CD8-positive, alpha-beta T cell (primary cell): ENCODE measurements at regions of chr15 and their contacts with region 1.

Region 1: DNA sequence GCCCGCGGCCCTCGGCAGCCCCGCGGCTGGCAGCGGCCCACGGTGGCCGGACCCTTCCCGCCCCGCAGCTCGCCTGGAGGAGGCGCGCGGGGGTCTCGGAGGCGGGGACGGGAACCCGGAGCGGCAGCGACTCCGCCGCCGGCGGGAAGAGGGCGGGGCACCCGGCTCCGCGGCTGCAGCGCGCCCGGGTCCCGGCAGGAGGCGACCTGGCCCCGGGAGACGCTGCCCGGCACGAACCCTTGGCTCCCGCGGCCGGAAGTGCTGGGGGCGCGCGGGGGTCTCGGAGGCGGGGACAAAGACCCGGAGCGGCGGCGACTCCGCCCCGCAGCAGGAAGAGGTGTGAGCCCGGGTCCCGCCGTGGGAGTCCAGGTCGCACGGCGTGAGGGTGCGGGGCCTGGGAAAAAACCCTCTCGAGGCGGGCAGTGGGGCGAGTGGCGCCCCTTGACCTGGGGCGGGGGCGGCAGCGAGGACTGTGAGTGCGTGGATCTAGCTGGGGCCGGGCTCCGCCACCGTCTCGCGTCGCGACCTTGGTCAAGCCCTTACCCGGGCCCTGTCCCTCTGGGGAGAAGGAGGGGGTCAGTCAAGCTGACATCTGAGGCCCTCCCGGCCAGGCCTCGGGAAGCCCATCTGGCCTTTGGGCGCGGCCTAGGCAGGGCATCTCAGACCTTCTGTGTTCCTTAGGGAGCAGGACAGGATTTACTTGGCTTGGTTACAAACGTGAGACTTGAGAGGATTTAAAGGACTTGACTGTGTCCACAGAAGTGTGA is at the start of gene CIB2:
- DNase-seq: peak; percentile 47 to 89 (median 74)
- ATAC-seq: peak; percentile 87
- H3K4me3 ChIP-seq: peak within 1 kb of the TSS; percentile 82 to 91
- H3K4me3 Mint-ChIP-seq: peak within 1 kb of the TSS; percentile 82
- H3K27ac ChIP-seq: peak within 1 kb of the TSS; percentile 65 to 89
- H3K27ac Mint-ChIP-seq: peak within 1 kb of the TSS; percentile 87
- H3K4me1 ChIP-seq: peaks cover 15% of the 10 kb centered on the region
- H3K4me1 Mint-ChIP-seq: peaks cover 26% of the 10 kb centered on the region
- H3K27me3 ChIP-seq: no peaks in the 10 kb centered on the region
- H3K27me3 Mint-ChIP-seq: no peaks in the 10 kb centered on the region
- CTCF ChIP-seq: peak; percentile 75
- total RNA-seq, gene CIB2: 1.2 to 1.9 TPM

Region 2: GRCh38 chr15:78149068-78149804 is 17.8 kb after region 1 on chr15 and contains the start of gene IDH3A:
- CTCF ChIA-PET with region 1: interaction called, 16 read pairs
- POLR2A ChIA-PET with region 1: interaction called, 23 read pairs
- intact Hi-C with region 1: loop called (anchors 1 kb)
- DNase-seq: peak; percentile 99 to 100 (median 100)
- ATAC-seq: peak; percentile 97
- H3K4me3 ChIP-seq: peak within 1 kb of the TSS; percentile 72 to 81
- H3K4me3 Mint-ChIP-seq: peak within 1 kb of the TSS; percentile 91
- H3K27ac ChIP-seq: peak within 1 kb of the TSS; percentile 65 to 67
- H3K27ac Mint-ChIP-seq: peak within 1 kb of the TSS; percentile 91
- H3K4me1 ChIP-seq: peaks cover 18% of the 10 kb centered on the region
- H3K4me1 Mint-ChIP-seq: peaks cover 44% of the 10 kb centered on the region
- H3K27me3 ChIP-seq: no peaks in the 10 kb centered on the region
- H3K27me3 Mint-ChIP-seq: no peaks in the 10 kb centered on the region
- CTCF ChIP-seq: no peak
- total RNA-seq, gene IDH3A: 54.4 to 61.0 TPM

Region 3: GRCh38 chr15:78177447-78177873 is 46.0 kb after region 1 on chr15:
- CTCF ChIA-PET with region 1: interaction called, 12 read pairs
- POLR2A ChIA-PET with region 1: interaction called, 3 read pairs
- intact Hi-C with region 1: loop called in 1 of 2 experiments (anchors 5 kb)
- DNase-seq: peak in 5 of 9 experiments; percentile 36 to 49 (median 38)
- ATAC-seq: peak; percentile 41
- H3K4me3 ChIP-seq: no peak overlapping the region
- H3K4me3 Mint-ChIP-seq: no peak overlapping the region
- H3K27ac ChIP-seq: no peak overlapping the region
- H3K27ac Mint-ChIP-seq: no peak overlapping the region
- H3K4me1 ChIP-seq: peaks cover 17% of the 10 kb centered on the region
- H3K4me1 Mint-ChIP-seq: peaks cover 25% of the 10 kb centered on the region
- H3K27me3 ChIP-seq: no peaks in the 10 kb centered on the region
- H3K27me3 Mint-ChIP-seq: peaks cover 3% of the 10 kb centered on the region
- CTCF ChIP-seq: peak; percentile 18

Region 4: DNA sequence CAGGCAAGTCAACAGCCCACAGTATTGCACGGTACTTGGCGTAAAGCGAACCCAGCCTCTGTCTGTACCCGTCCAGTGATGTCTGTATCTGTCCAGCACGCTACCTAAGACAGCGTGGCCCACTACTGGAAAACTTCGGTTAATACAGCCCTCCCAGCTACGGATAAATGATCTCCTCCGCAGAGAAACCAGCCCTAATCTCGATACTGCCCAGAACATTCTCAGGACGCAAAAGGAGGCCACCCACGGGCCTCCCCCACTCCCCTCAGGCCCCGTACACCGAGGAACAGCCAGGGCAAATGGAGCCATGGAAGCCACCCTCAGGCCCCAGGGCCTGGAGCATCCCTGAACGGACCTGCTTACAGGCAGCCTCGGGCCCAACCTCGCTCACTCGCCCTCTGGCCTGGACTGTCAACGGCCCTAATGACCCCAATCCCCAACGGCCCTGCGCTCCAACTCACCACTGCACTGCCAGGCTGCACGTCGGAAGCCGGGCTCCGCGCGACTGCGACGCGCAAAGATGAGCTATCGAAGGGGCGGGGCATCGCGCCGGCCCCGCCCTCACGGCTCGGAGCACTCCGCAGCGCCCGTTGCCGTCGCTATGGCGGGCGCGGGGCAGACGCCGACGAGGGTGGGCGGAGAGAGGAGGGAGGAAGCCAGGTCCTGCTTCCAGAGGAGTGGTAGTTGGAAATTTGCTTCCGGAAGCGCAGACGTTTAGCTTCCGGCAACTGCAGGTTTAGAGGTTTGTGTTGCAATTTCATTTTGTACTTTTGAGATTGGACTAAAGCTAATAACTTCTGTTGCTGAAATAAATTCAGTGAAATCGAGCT is 167.8 kb after region 1 on chr15 and contains the start of gene SKIC8:
- CTCF ChIA-PET with region 1: no interaction called
- POLR2A ChIA-PET with region 1: no interaction called
- intact Hi-C with region 1: loop called in 1 of 2 experiments (anchors 1 kb)
- DNase-seq: peak; percentile 80 to 95 (median 89)
- ATAC-seq: peak; percentile 98
- H3K4me3 ChIP-seq: peak within 1 kb of the TSS; percentile 89 to 99
- H3K4me3 Mint-ChIP-seq: peak within 1 kb of the TSS; percentile 98
- H3K27ac ChIP-seq: peak within 1 kb of the TSS; percentile 73 to 84
- H3K27ac Mint-ChIP-seq: peak within 1 kb of the TSS; percentile 96
- H3K4me1 ChIP-seq: peaks cover 12% of the 10 kb centered on the region
- H3K4me1 Mint-ChIP-seq: peaks cover 34% of the 10 kb centered on the region
- H3K27me3 ChIP-seq: no peaks in the 10 kb centered on the region
- H3K27me3 Mint-ChIP-seq: no peaks in the 10 kb centered on the region
- CTCF ChIP-seq: no peak
- total RNA-seq, gene SKIC8: 18.4 to 21.2 TPM

Region 5: GRCh38 chr15:78654272-78654671 is 522.8 kb after region 1 on chr15:
- CTCF ChIA-PET with region 1: no interaction called
- POLR2A ChIA-PET with region 1: no interaction called
- intact Hi-C with region 1: no loop called
- DNase-seq: no peak
- ATAC-seq: no peak
- H3K4me3 ChIP-seq: no peak overlapping the region
- H3K4me3 Mint-ChIP-seq: no peak overlapping the region
- H3K27ac ChIP-seq: no peak overlapping the region
- H3K27ac Mint-ChIP-seq: no peak overlapping the region
- H3K4me1 ChIP-seq: no peaks in the 10 kb centered on the region
- H3K4me1 Mint-ChIP-seq: no peaks in the 10 kb centered on the region
- H3K27me3 ChIP-seq: no peaks in the 10 kb centered on the region
- H3K27me3 Mint-ChIP-seq: peaks cover 2% of the 10 kb centered on the region
- CTCF ChIP-seq: no peak

Region 6: GRCh38 chr15:78840661-78841375 is 709.3 kb after region 1 on chr15:
- CTCF ChIA-PET with region 1: no interaction called
- POLR2A ChIA-PET with region 1: no interaction called
- intact Hi-C with region 1: no loop called
- DNase-seq: no peak
- ATAC-seq: no peak
- H3K4me3 ChIP-seq: no peak overlapping the region
- H3K4me3 Mint-ChIP-seq: no peak overlapping the region
- H3K27ac ChIP-seq: no peak overlapping the region
- H3K27ac Mint-ChIP-seq: no peak overlapping the region
- H3K4me1 ChIP-seq: no peaks in the 10 kb centered on the region
- H3K4me1 Mint-ChIP-seq: no peaks in the 10 kb centered on the region
- H3K27me3 ChIP-seq: no peaks in the 10 kb centered on the region
- H3K27me3 Mint-ChIP-seq: peaks cover 2% of the 10 kb centered on the region
- CTCF ChIP-seq: no peak